ENCODE measurements at regions of chr3 and their contacts with region 1.

Region 1: DNA sequence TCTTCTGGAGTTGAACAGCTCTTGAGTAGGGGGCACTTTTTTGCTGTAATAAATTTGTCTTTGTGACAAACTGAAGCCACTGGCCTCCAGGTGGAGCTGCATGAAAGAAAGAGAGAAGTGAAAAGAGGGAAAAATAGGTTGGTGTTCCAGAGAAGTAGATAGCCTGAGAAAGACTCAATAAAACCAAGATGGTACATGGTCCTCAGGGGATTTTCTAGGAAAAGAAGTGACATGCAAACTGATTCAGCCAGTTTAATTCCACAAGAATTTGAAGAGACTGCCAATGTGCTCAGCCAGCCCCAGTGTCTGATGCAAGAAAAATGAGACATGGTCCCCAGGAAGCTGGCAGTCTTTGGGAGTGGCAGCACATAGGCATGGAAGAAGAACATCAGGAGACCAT is 152.7 kb downstream of the CD47 start:
- DNase-seq: peak; percentile 46
- ATAC-seq: no peak
- H3K4me3 ChIP-seq: no peak overlapping the region
- H3K4me3 Mint-ChIP-seq: no peak overlapping the region
- H3K27ac ChIP-seq: no peak overlapping the region
- H3K27ac Mint-ChIP-seq: no peak overlapping the region
- H3K4me1 ChIP-seq: no peaks in the 10 kb centered on the region
- H3K4me1 Mint-ChIP-seq: peaks cover 2% of the 10 kb centered on the region
- H3K27me3 ChIP-seq: no peaks in the 10 kb centered on the region
- H3K27me3 Mint-ChIP-seq: peaks cover 3% of the 10 kb centered on the region
- CTCF ChIP-seq: peak; percentile 13

Region 2: GRCh38 chr3:107919239-107919638 is 18.9 kb before region 1 on chr3:
- CTCF ChIA-PET with region 1: no interaction called
- POLR2A ChIA-PET with region 1: no interaction called
- intact Hi-C with region 1: no loop called
- DNase-seq: no peak
- ATAC-seq: no peak
- H3K4me3 ChIP-seq: no peak overlapping the region
- H3K4me3 Mint-ChIP-seq: no peak overlapping the region
- H3K27ac ChIP-seq: no peak overlapping the region
- H3K27ac Mint-ChIP-seq: no peak overlapping the region
- H3K4me1 ChIP-seq: no peaks in the 10 kb centered on the region
- H3K4me1 Mint-ChIP-seq: no peaks in the 10 kb centered on the region
- H3K27me3 ChIP-seq: peaks cover 0 to 22% (median 8%) of the 10 kb centered on the region in 4 experiments
- H3K27me3 Mint-ChIP-seq: peaks cover 46% of the 10 kb centered on the region
- CTCF ChIP-seq: no peak

Region 3: DNA sequence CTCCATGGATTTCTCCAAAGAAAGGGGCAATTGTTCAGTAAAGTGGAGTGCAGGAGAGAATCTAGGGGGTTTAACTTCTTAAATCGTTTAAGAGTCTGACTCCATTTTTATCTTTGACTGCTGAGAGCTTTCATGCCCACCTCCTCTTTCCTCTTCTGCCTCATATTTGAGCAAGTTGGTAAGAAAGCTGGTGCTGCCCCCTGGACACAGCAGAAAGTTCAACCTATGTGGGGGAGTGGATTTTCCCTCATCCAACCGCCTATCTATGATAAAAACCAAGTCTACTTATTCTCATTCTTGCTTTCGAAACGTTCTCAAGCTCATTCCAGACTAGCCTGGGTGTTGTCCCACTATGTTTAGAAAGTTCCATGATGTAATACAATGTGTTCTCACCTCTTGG is 384.2 kb after region 1 on chr3:
- CTCF ChIA-PET with region 1: interaction called, 18 read pairs
- POLR2A ChIA-PET with region 1: no interaction called
- intact Hi-C with region 1: loop called (anchors 1 kb)
- DNase-seq: peak; percentile 55
- ATAC-seq: peak; percentile 73
- H3K4me3 ChIP-seq: no peak overlapping the region
- H3K4me3 Mint-ChIP-seq: no peak overlapping the region
- H3K27ac ChIP-seq: no peak overlapping the region
- H3K27ac Mint-ChIP-seq: no peak overlapping the region
- H3K4me1 ChIP-seq: no peaks in the 10 kb centered on the region
- H3K4me1 Mint-ChIP-seq: peaks cover 12% of the 10 kb centered on the region
- H3K27me3 ChIP-seq: no peaks in the 10 kb centered on the region
- H3K27me3 Mint-ChIP-seq: no peaks in the 10 kb centered on the region
- CTCF ChIP-seq: peak; percentile 52

Region 4: GRCh38 chr3:108546247-108546646 is 608.1 kb after region 1 on chr3:
- CTCF ChIA-PET with region 1: no interaction called
- POLR2A ChIA-PET with region 1: interaction called, 3 read pairs
- intact Hi-C with region 1: loop called (anchors 10 kb)
- DNase-seq: peak; percentile 4
- ATAC-seq: no peak
- H3K4me3 ChIP-seq: peak overlapping the region in 4 of 5 experiments; percentile 5 to 44 (median 32)
- H3K4me3 Mint-ChIP-seq: peak overlapping the region; percentile 67
- H3K27ac ChIP-seq: peak overlapping the region in 1 of 2 donors; percentile 54
- H3K27ac Mint-ChIP-seq: no peak overlapping the region
- H3K4me1 ChIP-seq: peaks cover 0 to 3% of the 10 kb centered on the region in 2 donors
- H3K4me1 Mint-ChIP-seq: peaks cover 10% of the 10 kb centered on the region
- H3K27me3 ChIP-seq: no peaks in the 10 kb centered on the region
- H3K27me3 Mint-ChIP-seq: no peaks in the 10 kb centered on the region
- CTCF ChIP-seq: no peak

Measured in B cell (primary cell).